ENCODE measurements at regions of chr15 and their contacts with region 1.

Region 1: GRCh38 chr15:64841258-64842095 is at the start of gene PLEKHO2:
- DNase-seq: peak; percentile 93 to 99
- ATAC-seq: peak; percentile 87 to 97
- H3K4me3 ChIP-seq: peak within 1 kb of the TSS; percentile 70
- H3K27ac ChIP-seq: peak within 1 kb of the TSS; percentile 82 to 95
- H3K4me1 ChIP-seq: peaks cover 13% of the 10 kb centered on the region; the same call in 2 of the 3 replicates
- CTCF ChIP-seq: no peak
- EP300 ChIP-seq: no peak
- POLR2A ChIP-seq: peak; percentile 76
- RAD21 ChIP-seq: no peak; a peak in 1 of 5 replicates
- polyA plus RNA-seq, gene PLEKHO2: 2.8 and 2.9 TPM in 2 replicates

Region 2: DNA sequence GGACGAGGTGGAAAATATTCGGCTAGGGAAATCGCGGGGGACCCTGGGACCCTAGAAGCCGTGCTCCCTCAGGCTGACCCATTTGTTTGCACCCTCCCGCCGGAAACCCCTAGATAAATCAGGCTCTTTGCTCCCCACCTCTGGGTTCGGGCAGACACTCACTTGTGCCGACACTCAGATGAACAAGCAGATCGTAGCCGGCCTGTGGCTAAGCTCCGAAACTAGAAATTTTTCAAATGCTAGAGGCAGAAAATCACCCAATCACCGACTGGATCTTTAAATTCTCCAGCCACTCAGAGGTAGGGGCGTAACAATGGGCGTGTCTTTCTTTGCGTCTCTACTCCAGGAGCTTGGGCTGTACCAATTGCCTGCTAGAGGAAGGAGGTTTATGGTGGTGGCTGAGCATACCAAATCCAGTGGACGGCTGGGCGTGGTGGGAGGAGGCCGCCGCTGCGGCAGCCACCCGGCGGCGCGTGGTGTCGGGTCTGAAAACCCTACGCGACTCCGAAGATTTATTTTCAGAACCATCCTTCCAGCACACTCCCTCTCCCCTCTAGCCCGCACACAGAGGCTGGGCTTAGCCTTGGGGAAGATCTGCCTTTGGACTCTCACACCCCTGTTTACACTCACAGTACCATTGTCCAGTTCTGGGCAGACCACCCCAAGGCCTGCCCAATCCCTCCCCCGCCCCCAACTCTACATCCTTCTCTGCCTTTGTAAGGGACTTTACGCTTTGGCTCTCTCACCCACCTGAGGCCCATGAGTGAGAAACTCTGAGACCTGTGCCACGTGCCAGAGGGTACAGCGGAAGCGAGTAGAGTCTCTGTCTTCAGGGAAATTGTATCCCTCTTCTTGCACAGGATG is 15.8 kb before region 1 on chr15 and contains the start of gene PIF1:
- CTCF ChIA-PET with region 1: interaction called, 25 read pairs
- POLR2A ChIA-PET with region 1: interaction called, 11 read pairs
- DNase-seq: peak; percentile 98 to 99
- ATAC-seq: peak; percentile 99
- H3K4me3 ChIP-seq: peak within 1 kb of the TSS; percentile 61
- H3K27ac ChIP-seq: peak within 1 kb of the TSS; percentile 74 to 91
- H3K4me1 ChIP-seq: peaks cover 9% of the 10 kb centered on the region
- CTCF ChIP-seq: no peak
- EP300 ChIP-seq: no peak
- POLR2A ChIP-seq: peak; percentile 84
- RAD21 ChIP-seq: no peak
- polyA plus RNA-seq, gene PIF1: 8.5 and 11.1 TPM in 2 replicates

Region 3: DNA sequence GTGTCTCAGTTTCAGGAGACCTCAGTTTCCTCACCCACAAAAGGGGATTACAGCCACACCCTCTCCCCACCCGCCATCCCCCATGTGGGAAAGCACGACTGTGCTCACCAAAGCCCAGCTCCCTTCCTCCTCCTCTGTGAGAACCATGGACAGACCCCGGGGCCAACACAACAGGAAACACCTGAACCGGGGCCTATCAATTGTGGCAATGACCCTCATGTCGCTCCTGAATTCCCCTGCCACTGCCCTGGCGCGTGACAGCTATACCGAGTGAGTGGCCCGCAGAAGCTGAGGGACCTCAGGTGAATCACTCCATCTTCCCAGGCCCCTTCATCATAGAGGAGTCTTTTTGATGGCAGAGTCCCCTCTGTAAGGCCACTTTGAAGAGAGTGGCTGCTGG is 28.9 kb after region 1 on chr15:
- CTCF ChIA-PET with region 1: no interaction called
- POLR2A ChIA-PET with region 1: no interaction called
- DNase-seq: no peak
- ATAC-seq: no peak
- H3K4me3 ChIP-seq: no peak overlapping the region
- H3K27ac ChIP-seq: no peak overlapping the region
- H3K4me1 ChIP-seq: peaks cover 17% of the 10 kb centered on the region
- CTCF ChIP-seq: no peak
- EP300 ChIP-seq: no peak
- POLR2A ChIP-seq: no peak
- RAD21 ChIP-seq: no peak

Region 4: GRCh38 chr15:64989416-64990167 is 148.1 kb after region 1 on chr15 and contains the start of gene SPG21:
- CTCF ChIA-PET with region 1: no interaction called
- POLR2A ChIA-PET with region 1: interaction called, 12 read pairs
- DNase-seq: peak; percentile 96 to 97
- ATAC-seq: peak; percentile 97 to 98
- H3K4me3 ChIP-seq: peak within 1 kb of the TSS; percentile 99
- H3K27ac ChIP-seq: peak within 1 kb of the TSS; percentile 93 to 99
- H3K4me1 ChIP-seq: peaks cover 25% of the 10 kb centered on the region
- CTCF ChIP-seq: no peak
- EP300 ChIP-seq: no peak
- POLR2A ChIP-seq: peak; percentile 90
- RAD21 ChIP-seq: no peak; a peak in 1 of 5 replicates
- polyA plus RNA-seq, gene SPG21: 146 and 155 TPM in 2 replicates